Psoas muscle (tissue), 8 donors: ENCODE measurements at regions of chr10 and their contacts with region 1.

Region 1: GRCh38 chr10:13440185-13441061 is 88.4 kb downstream of the BEND7 start:
- DNase-seq: peak; percentile 52 to 74
- ATAC-seq: peak; percentile 80 to 94 (median 86)
- H3K4me3 ChIP-seq: peak overlapping the region; percentile 59
- H3K27ac ChIP-seq: no peak overlapping the region
- H3K4me1 ChIP-seq: peaks cover 13% of the 10 kb centered on the region
- H3K27me3 ChIP-seq: peaks cover 0 to 31% (median 2%) of the 10 kb centered on the region in 3 donors
- CTCF ChIP-seq: peak; percentile 87

Region 2: DNA sequence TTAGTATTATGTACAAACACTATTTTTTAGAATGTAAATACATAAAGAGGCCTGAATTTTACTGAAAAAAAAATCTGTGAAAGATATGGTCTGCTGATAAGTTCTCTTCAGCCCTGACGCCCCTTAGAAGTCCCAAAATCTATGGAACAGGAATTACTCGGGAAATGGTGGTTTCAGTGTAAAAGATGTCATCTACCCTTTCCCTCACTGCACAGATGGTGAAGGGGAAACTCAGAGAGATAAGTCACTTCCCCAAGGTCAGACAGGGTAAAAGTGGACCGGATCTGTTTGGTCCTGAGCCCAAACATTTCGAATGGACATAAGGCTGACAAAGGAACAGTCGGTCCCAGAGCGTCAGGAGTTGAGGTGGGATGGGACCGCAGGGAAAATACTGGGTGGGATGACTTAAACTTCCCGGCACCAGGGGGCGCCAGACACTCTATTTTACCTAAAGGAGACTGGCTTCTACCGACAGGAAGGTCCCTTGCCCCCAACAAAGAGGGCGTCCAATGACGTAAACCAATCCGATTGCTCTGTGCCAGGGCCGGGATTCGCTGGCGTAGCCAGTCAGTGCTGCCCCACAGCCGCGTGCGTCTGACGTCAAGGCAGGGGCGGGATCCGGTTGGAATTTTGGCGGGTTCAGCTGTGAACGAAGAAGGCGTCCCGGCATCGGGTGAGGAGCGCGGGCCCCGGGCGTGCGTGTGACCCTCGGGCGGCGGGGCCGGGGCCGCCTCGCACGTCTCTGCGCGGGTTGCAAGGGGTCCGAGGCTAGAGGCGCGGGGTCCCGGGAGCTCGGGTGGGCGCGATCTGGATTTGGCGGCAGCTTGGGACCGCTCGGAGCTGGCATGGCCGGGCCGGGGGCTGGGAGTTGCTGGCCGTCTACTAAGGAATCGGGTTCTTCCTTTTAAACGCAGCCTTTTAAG is 279.2 kb before region 1 on chr10 and contains the start of gene MCM10:
- intact Hi-C with region 1: loop called in 1 of 2 experiments (anchors 5 kb)
- DNase-seq: peak; percentile 97 to 99
- ATAC-seq: peak; percentile 100
- H3K4me3 ChIP-seq: peak within 1 kb of the TSS; percentile 64
- H3K27ac ChIP-seq: no peak within 1 kb of the TSS
- H3K4me1 ChIP-seq: peaks cover 7% of the 10 kb centered on the region
- H3K27me3 ChIP-seq: no peaks in the 10 kb centered on the region
- CTCF ChIP-seq: peak; percentile 91
- total RNA-seq, gene MCM10: 0.10 to 0.83 (median 0.32) TPM in 3 of 4 donors, not detected in the other

Region 3: GRCh38 chr10:13371897-13372470 is 68.4 kb before region 1 on chr10:
- intact Hi-C with region 1: loop called (anchors 2 to 5 kb)
- DNase-seq: peak; percentile 42 to 67
- ATAC-seq: peak; percentile 75 to 89 (median 84)
- H3K4me3 ChIP-seq: no peak overlapping the region
- H3K27ac ChIP-seq: no peak overlapping the region
- H3K4me1 ChIP-seq: no peaks in the 10 kb centered on the region
- H3K27me3 ChIP-seq: no peaks in the 10 kb centered on the region
- CTCF ChIP-seq: peak; percentile 85